AG04450 (cell line): ENCODE measurements at regions of chr20 and their contacts with region 1.

Region 1: GRCh38 chr20:54103067-54103761 is 32.8 kb upstream of the BCAS1 start:
- DNase-seq: no peak
- H3K4me3 ChIP-seq: no peak overlapping the region
- H3K27ac ChIP-seq: no peak overlapping the region
- H3K27me3 ChIP-seq: no peaks in the 10 kb centered on the region
- CTCF ChIP-seq: peak; percentile 96

Region 2: DNA sequence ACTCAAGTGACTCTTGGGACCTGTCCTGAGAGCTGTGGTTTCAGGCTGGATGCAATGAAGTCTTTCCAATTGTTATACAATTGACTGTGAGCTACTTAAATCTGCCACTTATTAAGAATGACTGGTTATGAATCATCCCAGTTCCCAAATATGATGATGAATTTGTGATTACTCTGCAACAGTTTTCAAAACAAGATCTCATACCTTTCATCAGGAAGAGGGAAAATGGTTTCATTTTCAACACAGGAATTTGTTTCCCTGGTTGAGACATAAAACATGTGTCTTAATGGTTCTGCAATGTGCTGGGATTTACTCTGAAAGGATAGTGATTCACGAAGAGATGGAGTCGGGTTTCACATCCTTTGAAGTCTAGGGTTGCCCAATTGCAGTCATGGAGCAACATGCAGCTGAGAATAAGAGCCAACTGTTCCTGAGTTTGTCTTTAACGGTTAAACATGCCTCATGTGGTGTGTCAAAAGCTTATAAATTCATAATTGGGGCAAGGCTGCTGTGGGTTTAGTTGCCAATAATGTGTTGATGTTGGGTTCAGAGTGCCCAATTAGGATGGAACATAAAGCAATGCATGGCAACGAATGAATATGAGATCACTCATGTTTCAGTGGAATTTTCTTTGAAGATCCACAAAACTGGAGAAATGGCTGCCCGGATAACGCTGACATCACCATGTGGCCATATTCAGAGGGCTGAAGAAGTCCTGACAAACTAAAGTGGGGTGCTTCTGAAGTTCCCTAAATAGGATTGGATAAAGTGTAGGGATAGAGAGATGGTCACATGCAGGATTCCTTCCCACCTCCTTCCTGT is 29.6 kb after region 1 on chr20:
- CTCF ChIA-PET with region 1: interaction called, 14 read pairs
- POLR2A ChIA-PET with region 1: no interaction called
- DNase-seq: peak; percentile 94
- H3K4me3 ChIP-seq: no peak overlapping the region
- H3K27ac ChIP-seq: peak overlapping the region; percentile 86
- H3K27me3 ChIP-seq: no peaks in the 10 kb centered on the region
- CTCF ChIP-seq: no peak

Region 3: GRCh38 chr20:54148947-54149503 is 45.8 kb after region 1 on chr20:
- CTCF ChIA-PET with region 1: interaction called, 13 read pairs
- POLR2A ChIA-PET with region 1: interaction called, 3 read pairs
- DNase-seq: no peak
- H3K4me3 ChIP-seq: no peak overlapping the region
- H3K27ac ChIP-seq: no peak overlapping the region
- H3K27me3 ChIP-seq: no peaks in the 10 kb centered on the region
- CTCF ChIP-seq: no peak

Region 4: GRCh38 chr20:54173653-54174456 is 70.6 kb after region 1 on chr20 and contains the start of gene CYP24A1:
- CTCF ChIA-PET with region 1: interaction called, 15 read pairs
- POLR2A ChIA-PET with region 1: no interaction called
- DNase-seq: no peak
- H3K4me3 ChIP-seq: peak within 1 kb of the TSS; percentile 31; the same call in 1 of the 2 replicates
- H3K27ac ChIP-seq: no peak within 1 kb of the TSS
- H3K27me3 ChIP-seq: peaks cover 58% of the 10 kb centered on the region
- CTCF ChIP-seq: no peak
- polyA plus RNA-seq, gene CYP24A1: 2.1 TPM in 1 of 2 replicates, not detected in the other

Region 5: GRCh38 chr20:54188132-54188849 is 85.1 kb after region 1 on chr20:
- CTCF ChIA-PET with region 1: interaction called, 951 read pairs
- POLR2A ChIA-PET with region 1: no interaction called
- DNase-seq: no peak
- H3K4me3 ChIP-seq: no peak overlapping the region
- H3K27ac ChIP-seq: no peak overlapping the region
- H3K27me3 ChIP-seq: peaks cover 6% of the 10 kb centered on the region
- CTCF ChIP-seq: no peak